ENCODE measurements at regions of chr2 and their contacts with region 1.

Region 1: GRCh38 chr2:62133320-62133823 is 62.5 kb upstream of the B3GNT2 start:
- DNase-seq: no peak
- ATAC-seq: no peak
- H3K4me3 ChIP-seq: no peak overlapping the region
- H3K27ac ChIP-seq: peak overlapping the region; percentile 41
- H3K4me1 ChIP-seq: peaks cover 44% of the 10 kb centered on the region
- H3K27me3 ChIP-seq: no peaks in the 10 kb centered on the region
- CTCF ChIP-seq: no peak
- EP300 ChIP-seq: no peak
- POLR2A ChIP-seq: no peak
- RAD21 ChIP-seq: no peak

Region 2: DNA sequence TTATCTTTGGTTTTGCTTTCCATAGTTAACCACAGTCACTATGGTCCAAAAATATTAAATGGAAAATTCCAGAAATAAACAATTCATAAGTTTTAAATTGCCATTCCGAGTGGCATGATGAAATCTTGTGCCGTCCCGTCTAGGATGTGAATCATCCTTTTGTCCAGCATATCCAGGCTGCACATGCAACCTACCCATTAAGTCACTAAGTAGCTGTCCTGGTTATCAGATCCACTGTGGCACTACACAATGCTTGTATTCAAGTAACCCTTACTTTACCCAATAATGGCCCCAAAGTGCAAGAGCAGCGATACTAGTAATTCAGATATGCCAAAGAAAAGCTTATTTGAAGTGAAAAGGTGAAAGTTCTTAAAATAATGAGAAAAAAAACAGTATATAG is 673.2 kb before region 1 on chr2:
- CTCF ChIA-PET with region 1: no interaction called
- POLR2A ChIA-PET with region 1: no interaction called
- RAD21 ChIA-PET with region 1: no interaction called
- SMC1A ChIA-PET with region 1: no interaction called
- in situ Hi-C with region 1: no loop called
- intact Hi-C with region 1: no loop called
- DNase-seq: no peak
- ATAC-seq: no peak
- H3K4me3 ChIP-seq: no peak overlapping the region
- H3K27ac ChIP-seq: no peak overlapping the region
- H3K4me1 ChIP-seq: peaks cover 8% of the 10 kb centered on the region
- H3K27me3 ChIP-seq: no peaks in the 10 kb centered on the region
- CTCF ChIP-seq: no peak
- EP300 ChIP-seq: no peak
- POLR2A ChIP-seq: no peak
- RAD21 ChIP-seq: no peak

Region 3: DNA sequence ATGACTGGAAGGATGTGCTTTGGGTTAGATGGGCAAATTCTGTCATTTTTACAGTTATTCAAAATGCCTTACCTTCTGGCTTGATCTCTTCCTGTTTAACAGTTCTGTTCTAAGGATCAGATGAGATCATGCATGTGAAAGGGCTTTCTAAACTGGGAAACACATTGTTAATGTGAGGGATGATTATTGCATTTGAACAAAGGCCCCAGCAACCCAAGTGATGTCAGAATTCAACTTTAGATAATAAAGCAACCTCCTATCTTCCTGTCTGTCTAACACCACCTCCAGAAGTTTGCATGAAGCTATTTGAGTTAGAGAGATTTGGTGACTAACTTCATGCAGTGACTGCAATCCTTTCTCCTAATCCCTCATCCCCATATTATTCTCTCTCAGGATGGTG is 15.2 kb before region 1 on chr2:
- CTCF ChIA-PET with region 1: interaction called, 4 read pairs
- POLR2A ChIA-PET with region 1: interaction called, 11 read pairs
- RAD21 ChIA-PET with region 1: interaction called, 4 read pairs
- SMC1A ChIA-PET with region 1: interaction called, 7 read pairs
- in situ Hi-C with region 1: no loop called
- intact Hi-C with region 1: no loop called
- DNase-seq: no peak
- ATAC-seq: no peak
- H3K4me3 ChIP-seq: no peak overlapping the region
- H3K27ac ChIP-seq: peak overlapping the region; percentile 22; the same call in 1 of the 2 replicates
- H3K4me1 ChIP-seq: peaks cover 48% of the 10 kb centered on the region
- H3K27me3 ChIP-seq: no peaks in the 10 kb centered on the region
- CTCF ChIP-seq: no peak
- EP300 ChIP-seq: no peak
- POLR2A ChIP-seq: no peak
- RAD21 ChIP-seq: no peak

Region 4: GRCh38 chr2:62248221-62248620 is 114.8 kb after region 1 on chr2:
- CTCF ChIA-PET with region 1: no interaction called
- POLR2A ChIA-PET with region 1: no interaction called
- RAD21 ChIA-PET with region 1: no interaction called
- SMC1A ChIA-PET with region 1: no interaction called
- in situ Hi-C with region 1: no loop called
- intact Hi-C with region 1: no loop called
- DNase-seq: no peak
- ATAC-seq: no peak
- H3K4me3 ChIP-seq: no peak overlapping the region
- H3K27ac ChIP-seq: no peak overlapping the region
- H3K4me1 ChIP-seq: no peaks in the 10 kb centered on the region
- H3K27me3 ChIP-seq: no peaks in the 10 kb centered on the region
- CTCF ChIP-seq: no peak
- EP300 ChIP-seq: no peak
- POLR2A ChIP-seq: no peak
- RAD21 ChIP-seq: no peak